Psoas muscle (tissue), 8 donors: ENCODE measurements at regions of chr5 and their contacts with region 1.

Region 1: GRCh38 chr5:108748401-108749127 is 867 bp downstream of the FER start:
- DNase-seq: peak; percentile 99
- ATAC-seq: peak; percentile 97 to 99 (median 99)
- H3K4me3 ChIP-seq: peak overlapping the region; percentile 88
- H3K27ac ChIP-seq: peak overlapping the region; percentile 98
- H3K4me1 ChIP-seq: peaks cover 12% of the 10 kb centered on the region
- H3K27me3 ChIP-seq: no peaks in the 10 kb centered on the region
- CTCF ChIP-seq: no peak

Region 2: DNA sequence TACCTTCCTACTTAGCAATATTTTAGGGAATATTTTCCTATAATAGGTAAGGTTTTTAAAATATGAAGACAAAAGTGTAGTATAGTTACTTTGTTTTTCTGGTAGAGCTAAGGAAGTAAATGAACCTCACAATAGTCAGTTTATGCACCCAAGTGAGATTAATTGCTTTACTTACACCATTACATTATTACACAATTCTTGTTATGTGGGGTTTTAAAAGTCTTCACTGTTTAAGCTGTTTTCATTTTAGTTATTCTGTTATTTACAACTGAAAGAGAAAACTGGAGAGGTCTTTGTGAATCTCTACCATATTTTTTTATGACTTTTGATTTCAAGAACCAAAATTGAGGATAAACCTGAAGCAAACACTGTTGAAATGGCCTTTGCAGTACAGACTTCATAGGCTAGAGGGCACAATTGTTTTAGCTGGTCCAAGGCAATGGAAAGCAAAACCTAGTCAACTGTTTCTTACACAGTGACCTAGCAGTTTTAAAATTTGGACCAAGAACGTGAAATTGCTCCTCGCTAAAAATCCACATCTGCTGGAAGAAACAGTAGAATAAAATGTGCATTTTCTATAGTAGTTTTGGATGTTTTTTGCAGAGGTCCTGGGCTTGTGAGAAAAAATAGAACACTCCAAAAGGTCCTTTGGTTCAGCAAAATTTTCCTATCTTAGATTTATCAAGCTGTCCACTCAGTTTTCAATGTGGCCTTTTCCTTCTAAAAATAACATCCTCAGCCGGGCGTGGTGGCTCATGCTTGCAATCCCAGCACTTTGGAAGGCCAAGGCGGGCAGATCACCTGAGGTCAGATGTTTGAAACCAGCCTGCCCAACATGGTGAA is 67.3 kb before region 1 on chr5:
- intact Hi-C with region 1: loop called in 1 of 2 experiments (anchors 5 kb)
- DNase-seq: no peak
- ATAC-seq: peak; percentile 82 to 99 (median 92)
- H3K4me3 ChIP-seq: peak overlapping the region; percentile 50
- H3K27ac ChIP-seq: peak overlapping the region; percentile 53
- H3K4me1 ChIP-seq: peaks cover 3% of the 10 kb centered on the region
- H3K27me3 ChIP-seq: no peaks in the 10 kb centered on the region
- CTCF ChIP-seq: peak; percentile 74

Region 3: GRCh38 chr5:110361461-110361860 is 1612.9 kb after region 1 on chr5:
- intact Hi-C with region 1: no loop called
- DNase-seq: no peak
- ATAC-seq: no peak
- H3K4me3 ChIP-seq: no peak overlapping the region
- H3K27ac ChIP-seq: no peak overlapping the region
- H3K4me1 ChIP-seq: no peaks in the 10 kb centered on the region
- H3K27me3 ChIP-seq: no peaks in the 10 kb centered on the region
- CTCF ChIP-seq: no peak